HepG2 (cell line): ENCODE measurements at regions of chr1 and their contacts with region 1.

Region 1: DNA sequence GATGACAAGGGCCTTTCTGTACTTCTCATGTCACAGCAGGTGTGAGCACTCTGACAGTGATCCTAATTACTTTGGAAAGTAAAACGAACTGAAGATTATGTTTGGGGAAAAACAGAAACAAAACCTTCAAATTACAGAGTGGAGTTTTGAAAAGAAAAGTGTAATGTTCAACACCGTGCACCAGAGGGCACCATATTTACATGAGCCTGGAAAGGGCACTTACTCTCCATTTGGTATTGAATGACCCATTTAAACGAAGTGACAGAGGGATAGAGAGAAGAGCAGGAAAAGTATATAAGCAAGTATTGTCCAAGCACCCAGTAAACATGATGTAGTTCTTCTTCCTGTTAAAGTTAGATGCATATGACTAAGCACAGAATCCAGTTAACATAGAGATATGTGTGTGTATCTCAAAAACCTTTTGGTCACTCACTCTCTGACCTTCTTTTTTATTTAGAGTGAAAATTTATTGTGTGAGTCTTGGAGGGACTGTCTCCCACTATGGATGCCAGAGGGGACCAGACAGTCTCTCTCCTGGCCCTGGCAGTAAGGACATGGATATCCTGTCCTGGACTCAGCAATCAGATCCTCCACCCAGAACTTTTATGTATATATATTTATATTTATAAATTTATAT is 3.8 kb upstream of the RGSL1 start:
- DNase-seq: peak; percentile 39
- ATAC-seq: peak; percentile 65
- H3K4me3 ChIP-seq: no peak overlapping the region
- H3K27ac ChIP-seq: no peak overlapping the region
- H3K4me1 ChIP-seq: no peaks in the 10 kb centered on the region
- H3K27me3 ChIP-seq: no peaks in the 10 kb centered on the region
- CTCF ChIP-seq: peak; percentile 76
- EP300 ChIP-seq: no peak
- POLR2A ChIP-seq: no peak
- RAD21 ChIP-seq: peak; percentile 43; the same call in 1 of the 2 replicates

Region 2: GRCh38 chr1:182476625-182477024 is 30.5 kb after region 1 on chr1:
- CTCF ChIA-PET with region 1: no interaction called
- POLR2A ChIA-PET with region 1: no interaction called
- in situ Hi-C with region 1: no loop called
- intact Hi-C with region 1: no loop called
- DNase-seq: no peak
- ATAC-seq: no peak
- H3K4me3 ChIP-seq: no peak overlapping the region
- H3K27ac ChIP-seq: no peak overlapping the region
- H3K4me1 ChIP-seq: no peaks in the 10 kb centered on the region
- H3K27me3 ChIP-seq: peaks cover 0 to 15% of the 10 kb centered on the region in 2 experiments; a peak in 3 of 5 replicates
- CTCF ChIP-seq: no peak
- EP300 ChIP-seq: no peak
- POLR2A ChIP-seq: no peak
- RAD21 ChIP-seq: no peak

Region 3: DNA sequence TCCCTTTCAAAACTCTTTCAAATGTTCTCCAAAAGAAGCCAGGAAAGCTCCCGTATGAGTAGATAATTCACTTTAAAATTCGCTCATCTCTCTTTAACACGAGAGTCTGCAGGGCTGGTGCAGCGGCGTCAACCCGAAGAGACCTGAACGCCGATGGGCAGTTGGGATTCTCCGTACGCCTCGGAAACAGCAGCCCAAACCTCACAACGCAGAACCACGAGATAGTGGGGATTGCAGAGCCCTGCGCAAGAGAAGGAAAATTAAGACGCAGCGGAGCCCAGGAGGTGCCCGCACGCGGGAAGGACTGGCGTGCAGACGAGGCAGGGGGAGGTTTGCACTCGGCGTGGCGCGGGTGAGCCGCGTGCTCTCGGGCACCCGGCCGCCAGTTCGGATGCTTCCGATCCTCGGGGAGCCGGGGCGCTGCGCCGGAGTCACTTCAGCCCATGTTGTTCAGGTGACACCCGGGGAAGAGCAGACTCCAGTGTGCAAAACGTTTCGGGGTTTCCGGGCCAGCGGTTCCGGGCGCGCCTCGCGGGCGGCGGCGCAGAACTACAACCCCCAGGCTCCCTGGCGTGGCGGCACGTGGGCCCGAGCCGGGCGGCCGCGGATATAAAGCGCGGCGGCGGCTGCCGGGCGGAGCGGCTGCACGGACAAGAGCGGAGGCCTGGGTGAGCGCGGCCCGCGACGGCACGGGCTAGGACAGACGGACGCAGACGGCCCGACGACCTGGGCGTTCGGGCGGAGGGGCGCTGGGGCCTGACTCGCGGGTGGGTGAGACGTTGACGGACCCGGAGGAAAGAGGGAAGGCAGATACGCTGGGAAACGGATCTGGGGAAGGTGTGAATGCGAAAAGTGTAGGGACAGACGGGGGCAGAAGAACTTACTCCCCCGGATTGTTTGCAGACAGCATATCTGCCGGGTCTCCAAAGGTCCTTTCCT is 343.3 kb after region 1 on chr1 and contains the start of gene NPL:
- CTCF ChIA-PET with region 1: no interaction called
- POLR2A ChIA-PET with region 1: no interaction called
- in situ Hi-C with region 1: loop called (anchors 10 kb)
- intact Hi-C with region 1: no loop called
- DNase-seq: peak; percentile 22
- ATAC-seq: peak; percentile 96
- H3K4me3 ChIP-seq: peak within 1 kb of the TSS; percentile 25 to 62 (median 33); a peak in 5 of 6 replicates
- H3K27ac ChIP-seq: no peak within 1 kb of the TSS
- H3K4me1 ChIP-seq: peaks cover 13% of the 10 kb centered on the region
- H3K27me3 ChIP-seq: peaks cover 8 to 41% of the 10 kb centered on the region in 2 experiments
- CTCF ChIP-seq: no peak; the same call in 1 of the 2 replicates
- EP300 ChIP-seq: no peak
- POLR2A ChIP-seq: no peak
- RAD21 ChIP-seq: no peak
- total RNA-seq, gene NPL: 0.04 TPM in 1 of 2 replicates, not detected in the other